Panc1 (cell line): ENCODE measurements at regions of chr22 and their contacts with region 1.

Region 1: DNA sequence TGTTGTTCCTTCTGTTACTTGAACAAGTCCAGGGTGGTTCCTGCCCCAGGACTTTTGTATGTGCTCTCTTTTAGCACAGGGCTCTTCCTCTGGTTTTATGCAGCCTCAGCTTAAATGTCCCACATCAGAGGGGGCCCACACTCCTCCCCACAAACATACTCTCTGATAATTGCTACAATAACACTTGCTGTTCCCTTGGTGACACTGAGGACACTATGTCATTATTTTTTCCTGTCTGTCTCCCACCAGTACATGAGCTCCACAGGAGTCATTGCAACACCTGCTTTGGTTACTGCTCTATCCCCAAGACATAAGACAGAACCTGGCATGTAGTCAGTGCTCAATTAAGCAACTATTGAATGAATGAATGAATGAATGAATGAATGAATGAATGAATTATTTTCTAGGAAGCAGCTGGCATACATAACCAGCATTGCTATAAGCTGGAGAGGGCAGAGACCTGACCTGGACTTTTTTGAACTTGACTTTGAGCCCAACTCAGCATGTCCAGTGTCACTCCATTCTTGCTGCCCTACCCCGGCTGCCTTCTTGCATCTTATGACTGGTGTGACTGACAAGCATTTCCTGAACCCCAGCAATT is 7.5 kb upstream of the WNT7B start:
- DNase-seq: no peak
- ATAC-seq: no peak
- H3K4me3 ChIP-seq: no peak overlapping the region
- H3K27ac ChIP-seq: no peak overlapping the region
- H3K4me1 ChIP-seq: no peaks in the 10 kb centered on the region
- H3K27me3 ChIP-seq: no peaks in the 10 kb centered on the region
- CTCF ChIP-seq: no peak

Region 2: DNA sequence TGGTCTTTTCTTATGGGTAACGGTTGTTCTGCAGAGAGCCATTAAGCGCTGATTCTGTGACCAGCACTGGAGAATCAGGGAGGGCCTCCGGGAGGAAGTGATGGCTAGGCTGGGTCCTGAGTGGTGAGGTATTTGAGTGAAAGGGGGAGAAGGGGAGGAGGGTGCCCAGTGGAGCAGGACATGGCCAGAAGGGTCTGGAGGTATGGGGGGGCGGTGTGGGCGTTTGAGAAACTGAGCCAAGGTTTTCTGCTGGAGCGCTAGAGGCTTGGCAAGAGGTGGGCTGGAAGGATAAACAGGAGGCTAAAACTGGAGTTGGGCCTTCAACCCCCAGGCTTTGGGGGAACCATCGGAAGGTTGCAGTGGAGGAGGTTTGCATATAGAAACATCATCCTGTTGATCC is 409.2 kb before region 1 on chr22:
- CTCF ChIA-PET with region 1: interaction called, 10 read pairs
- POLR2A ChIA-PET with region 1: no interaction called
- in situ Hi-C with region 1: no loop called
- intact Hi-C with region 1: no loop called
- DNase-seq: no peak
- ATAC-seq: no peak
- H3K4me3 ChIP-seq: no peak overlapping the region
- H3K27ac ChIP-seq: no peak overlapping the region
- H3K4me1 ChIP-seq: peaks cover 4% of the 10 kb centered on the region
- H3K27me3 ChIP-seq: no peaks in the 10 kb centered on the region
- CTCF ChIP-seq: no peak

Region 3: DNA sequence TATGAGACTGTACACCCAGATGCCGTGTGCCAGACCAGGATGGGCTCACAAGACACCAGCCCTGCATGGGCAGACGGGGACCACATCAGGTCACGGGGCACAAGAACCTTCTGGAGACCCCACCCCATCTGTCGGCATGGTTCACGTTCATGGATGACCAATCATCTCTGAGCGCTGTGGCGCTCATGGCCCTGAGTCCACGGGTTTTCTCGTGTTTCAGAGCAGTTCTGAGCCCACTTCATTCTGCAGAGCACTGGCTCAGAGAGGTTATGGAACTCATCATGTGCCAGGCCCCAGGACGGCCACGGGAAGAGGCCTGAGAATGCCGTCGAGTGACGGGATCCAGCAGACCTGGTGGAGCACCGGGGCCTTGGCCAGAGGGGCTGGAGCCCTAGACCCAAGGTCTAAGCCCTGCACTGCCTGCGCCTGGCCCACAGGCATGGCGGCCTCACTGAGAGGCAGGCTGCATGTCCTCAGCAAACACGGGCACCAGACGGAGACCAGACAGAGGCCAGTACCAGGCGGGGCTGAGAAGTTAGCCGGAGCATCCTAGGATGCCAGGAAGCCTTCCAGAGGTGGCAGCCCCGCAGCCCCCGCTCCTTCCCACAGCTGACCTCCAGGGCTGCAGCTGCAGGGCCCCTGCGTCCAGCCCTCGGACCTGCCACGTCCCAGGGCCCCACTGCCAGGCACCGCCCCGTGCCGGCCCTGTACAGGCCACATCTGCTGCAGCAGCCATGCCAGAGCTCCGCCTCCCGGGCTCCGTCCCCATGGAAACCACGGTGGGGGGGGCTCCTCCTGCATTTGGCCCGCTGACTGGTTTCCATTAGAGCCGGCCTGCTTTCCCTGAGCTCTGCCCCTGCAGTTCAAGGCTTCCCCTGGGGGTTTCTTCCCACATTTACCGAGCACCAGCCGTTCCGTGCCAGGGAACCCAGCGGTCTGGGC is 103.2 kb after region 1 on chr22:
- CTCF ChIA-PET with region 1: no interaction called
- POLR2A ChIA-PET with region 1: no interaction called
- in situ Hi-C with region 1: no loop called
- intact Hi-C with region 1: no loop called
- DNase-seq: no peak
- ATAC-seq: peak; percentile 61
- H3K4me3 ChIP-seq: peak overlapping the region; percentile 83 to 90
- H3K27ac ChIP-seq: peak overlapping the region; percentile 99
- H3K4me1 ChIP-seq: peaks cover 93% of the 10 kb centered on the region
- H3K27me3 ChIP-seq: no peaks in the 10 kb centered on the region
- CTCF ChIP-seq: no peak